Activated T-helper 1 cell treated with anti-CD3 and anti-CD28 coated beads, Interleukin-12 subunit alpha, Interleukin-12 subunit beta, Interleukin-2, Interleukin-4 antibody, amounts not matched to agents 30 ng/mL and 10 ng/mL and 1 ng/mL, durations not matched to agents 14 hours and 24 hours and 36 hours (primary cell): ENCODE measurements at regions of chr2 and their contacts with region 1.

Region 1: DNA sequence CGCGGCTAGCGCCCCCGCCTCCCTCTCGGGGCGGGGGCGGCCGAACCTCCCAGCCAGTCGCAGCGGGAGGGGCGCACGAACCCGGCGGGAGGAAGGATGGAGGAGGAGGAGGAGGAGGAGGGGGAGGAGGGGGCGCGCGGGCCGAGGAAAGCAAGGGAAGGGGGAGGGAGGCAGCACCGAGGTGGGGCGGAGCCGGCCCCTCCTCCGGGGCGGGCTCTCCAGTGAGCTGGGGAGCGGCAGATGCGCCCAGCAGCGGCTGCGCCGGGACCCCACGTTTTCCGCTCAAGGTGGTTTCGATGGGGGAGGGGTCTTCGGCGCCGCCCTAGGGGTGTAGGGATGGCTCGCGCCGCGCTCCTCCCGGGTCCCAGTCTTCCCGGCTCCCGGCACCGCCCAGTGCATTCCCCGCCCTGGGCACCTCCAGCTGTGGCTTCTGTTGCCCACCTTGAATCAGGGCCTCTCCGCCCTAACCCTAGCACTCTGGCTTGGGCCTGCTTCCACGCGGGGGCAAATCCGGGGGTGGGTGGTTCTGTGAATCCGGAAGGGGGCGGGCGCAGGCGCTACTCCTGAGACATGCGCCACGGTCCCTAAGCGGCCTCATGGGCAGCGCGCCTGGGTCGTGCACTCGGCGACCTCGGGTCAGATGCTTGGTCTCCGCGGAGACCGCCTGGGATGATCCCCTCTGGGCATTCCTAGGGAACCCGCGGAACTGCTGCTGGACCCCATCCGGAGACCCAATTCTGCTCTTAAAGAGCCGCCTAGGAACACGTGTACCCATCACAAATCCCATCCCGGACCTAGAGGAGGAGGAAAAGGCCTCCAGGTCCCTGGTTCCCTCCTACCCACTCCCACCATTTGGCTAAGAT is at the start of gene FBXO41:
- DNase-seq: peak; percentile 68
- H3K4me3 Mint-ChIP-seq: peak within 1 kb of the TSS; percentile 84
- H3K27ac Mint-ChIP-seq: peak within 1 kb of the TSS; percentile 57
- H3K4me1 Mint-ChIP-seq: peaks cover 18% of the 10 kb centered on the region
- H3K27me3 Mint-ChIP-seq: peaks cover 15% of the 10 kb centered on the region
- total RNA-seq, gene FBXO41: 29.3 and 30.9 TPM in 2 replicates

Region 2: DNA sequence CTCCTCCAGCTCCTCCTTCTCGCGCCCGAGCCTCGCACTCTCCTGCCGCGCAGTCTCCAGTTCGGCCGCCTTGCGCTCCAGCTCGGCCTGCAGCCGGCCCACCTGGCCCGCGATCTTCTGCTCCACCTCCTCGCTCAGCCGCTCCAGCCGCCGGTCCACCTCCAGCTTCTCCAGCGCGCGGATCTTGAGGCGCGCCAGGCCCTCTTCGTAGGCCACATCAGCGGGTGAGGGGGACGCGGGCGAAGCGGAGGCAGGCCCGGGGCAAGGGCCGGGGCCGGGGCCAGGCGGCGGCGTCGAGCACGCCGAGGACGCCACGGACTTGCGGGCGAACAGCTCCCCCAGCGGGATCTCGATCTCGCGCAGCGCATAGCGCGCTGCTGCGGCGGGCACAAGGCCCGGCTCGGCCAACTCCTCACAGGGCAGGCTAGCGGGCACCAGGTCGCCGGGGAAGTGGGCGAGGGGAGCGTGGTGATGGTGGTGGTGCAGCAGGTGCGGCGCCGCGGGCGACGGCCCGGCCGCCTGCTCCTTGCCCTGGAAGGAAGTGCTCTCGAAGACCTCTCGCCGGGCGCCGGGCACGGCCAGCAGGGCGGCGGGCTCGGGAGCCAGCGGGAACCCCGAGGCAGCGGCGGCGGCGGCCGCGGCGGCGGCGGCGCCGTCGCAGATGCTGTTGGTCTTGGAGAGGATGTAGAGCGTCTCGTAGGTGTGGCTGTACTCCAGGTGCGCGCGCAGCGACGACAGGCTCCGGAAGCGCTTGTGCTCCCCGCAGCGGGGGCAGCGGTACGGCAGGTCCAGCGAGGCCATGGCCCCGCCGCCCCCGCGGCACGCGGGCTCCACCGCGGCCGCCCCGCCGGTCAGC is 15.5 kb before region 1 on chr2:
- intact Hi-C with region 1: loop called (anchors 1 kb)
- DNase-seq: peak; percentile 73
- H3K4me3 Mint-ChIP-seq: no peak overlapping the region
- H3K27ac Mint-ChIP-seq: no peak overlapping the region
- H3K4me1 Mint-ChIP-seq: peaks cover 29% of the 10 kb centered on the region
- H3K27me3 Mint-ChIP-seq: no peaks in the 10 kb centered on the region